A673 (cell line): ENCODE measurements at regions of chr7 and their contacts with region 1.

Region 1: DNA sequence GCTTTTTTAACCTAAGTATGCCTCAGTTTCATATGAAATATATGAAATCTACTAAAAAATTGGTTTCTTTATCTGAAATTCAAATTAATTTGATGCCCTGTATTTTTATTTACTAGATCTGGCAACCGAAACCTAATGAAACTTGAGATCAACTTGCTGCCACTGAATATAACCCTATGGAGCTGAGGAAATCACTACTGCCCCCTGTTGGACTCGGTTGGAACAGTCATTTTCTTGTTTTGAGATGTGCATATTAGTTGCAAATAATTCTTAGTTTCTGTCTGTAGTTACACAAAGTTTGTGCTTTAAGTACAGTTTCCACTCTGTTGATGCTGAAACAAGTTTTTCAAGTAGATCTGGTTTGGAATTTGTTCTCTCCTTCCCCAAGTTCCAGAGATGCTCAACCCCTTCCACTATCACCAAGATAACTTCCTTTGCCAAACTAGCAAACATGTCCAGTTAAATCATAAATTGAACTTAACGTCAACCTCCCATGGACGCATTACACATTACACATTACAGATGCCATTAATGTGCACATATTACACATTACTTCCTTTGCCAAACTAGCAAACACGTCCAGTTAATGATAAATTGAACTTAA is 22.2 kb upstream of the EXOC4 start:
- DNase-seq: peak; percentile 70
- H3K4me3 ChIP-seq: no peak overlapping the region
- H3K27ac ChIP-seq: no peak overlapping the region
- H3K4me1 ChIP-seq: no peaks in the 10 kb centered on the region
- H3K27me3 ChIP-seq: peaks cover 12% of the 10 kb centered on the region
- CTCF ChIP-seq: peak; percentile 89

Region 2: GRCh38 chr7:132758986-132759385 is 471.7 kb before region 1 on chr7:
- CTCF ChIA-PET with region 1: interaction called, 10 read pairs
- POLR2A ChIA-PET with region 1: no interaction called
- intact Hi-C with region 1: no loop called
- DNase-seq: no peak
- H3K4me3 ChIP-seq: no peak overlapping the region
- H3K27ac ChIP-seq: no peak overlapping the region
- H3K4me1 ChIP-seq: no peaks in the 10 kb centered on the region
- H3K27me3 ChIP-seq: no peaks in the 10 kb centered on the region
- CTCF ChIP-seq: no peak

Region 3: DNA sequence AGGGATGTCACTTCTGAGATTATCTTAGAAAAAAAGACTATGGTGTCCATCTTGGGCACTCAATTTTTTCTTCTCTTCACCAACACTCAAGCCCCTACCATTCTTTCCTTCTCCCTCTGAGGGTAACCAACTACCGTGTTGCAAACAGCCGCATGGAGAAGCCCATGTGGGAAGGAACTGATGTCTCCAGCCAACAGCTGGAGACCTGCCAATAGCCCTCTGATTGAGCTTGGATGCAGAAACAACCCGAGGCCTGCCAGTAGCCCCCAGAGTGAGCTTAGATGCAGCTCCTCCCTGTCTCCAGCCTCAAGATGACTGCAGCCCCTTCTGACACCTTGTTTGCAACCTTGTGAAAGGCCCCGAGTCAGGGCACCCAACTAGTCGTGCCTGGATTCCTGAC is 112.4 kb before region 1 on chr7:
- CTCF ChIA-PET with region 1: interaction called, 10 read pairs
- POLR2A ChIA-PET with region 1: no interaction called
- intact Hi-C with region 1: no loop called
- DNase-seq: no peak
- H3K4me3 ChIP-seq: no peak overlapping the region
- H3K27ac ChIP-seq: no peak overlapping the region
- H3K4me1 ChIP-seq: no peaks in the 10 kb centered on the region
- H3K27me3 ChIP-seq: peaks cover 19% of the 10 kb centered on the region
- CTCF ChIP-seq: no peak